ENCODE measurements at regions of chr7 and their contacts with region 1.

Region 1: DNA sequence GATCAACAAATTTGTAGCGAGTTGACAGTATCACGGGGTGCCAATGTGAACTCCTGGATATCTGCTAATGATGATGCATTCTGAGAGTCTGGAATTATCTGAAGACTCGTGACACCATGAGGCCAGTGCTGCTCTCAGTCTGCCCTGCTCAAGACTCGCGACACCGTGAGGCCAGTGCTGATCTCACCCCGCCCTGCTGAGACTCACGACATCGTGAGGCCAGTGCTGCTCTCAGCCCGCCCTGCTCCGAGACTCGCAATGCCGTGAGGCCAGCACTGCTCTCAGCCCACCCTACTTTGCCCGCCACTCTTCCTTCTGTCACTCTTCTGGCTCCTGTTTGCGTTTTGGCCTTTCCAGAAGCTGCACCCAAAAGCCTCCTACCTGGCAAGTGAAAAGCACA is 411.8 kb downstream of the PTPRN2 start:
- DNase-seq: no peak
- ATAC-seq: no peak
- H3K4me3 ChIP-seq: no peak overlapping the region
- H3K27ac ChIP-seq: no peak overlapping the region
- H3K4me1 ChIP-seq: no peaks in the 10 kb centered on the region
- H3K27me3 ChIP-seq: no peaks in the 10 kb centered on the region
- CTCF ChIP-seq: no peak
- POLR2A ChIP-seq: no peak

Region 2: DNA sequence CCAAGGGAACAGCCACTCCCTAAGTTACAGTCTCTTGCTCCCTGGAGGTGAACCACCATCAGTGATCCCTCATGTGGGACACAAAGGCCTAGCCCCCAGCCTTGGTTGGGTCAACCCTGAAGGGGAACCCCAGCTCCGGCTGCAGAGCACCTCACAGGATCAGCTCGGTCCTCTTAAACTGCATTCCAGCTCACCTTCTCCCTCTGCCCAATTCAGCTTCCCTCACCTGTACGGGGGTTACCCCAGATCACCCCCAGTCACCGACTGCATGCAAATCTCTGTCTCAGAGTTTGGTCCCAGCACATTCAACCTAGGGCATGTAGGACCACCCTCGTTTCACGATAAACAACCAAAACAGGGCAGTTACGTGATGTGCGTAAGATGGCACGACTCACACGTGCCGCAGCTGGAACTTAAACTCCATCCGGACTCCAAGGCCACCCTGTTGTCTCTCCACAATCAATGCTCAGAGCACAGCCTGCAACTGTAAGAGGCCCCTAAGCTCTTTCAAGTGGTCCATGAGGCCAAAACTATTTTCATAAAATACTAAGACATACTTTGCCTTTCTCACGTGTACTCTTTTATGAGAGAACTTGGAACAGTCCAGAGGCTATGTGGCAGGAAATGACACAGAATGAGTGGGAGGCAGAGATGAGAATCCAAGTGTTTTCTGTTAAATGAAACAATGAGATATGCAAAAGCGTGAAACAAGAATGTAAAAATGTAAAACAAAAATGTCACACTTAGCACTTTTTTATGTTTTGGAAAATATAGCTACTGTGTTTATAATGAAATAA is 126.7 kb after region 1 on chr7:
- intact Hi-C with region 1: loop called in 1 of 2 experiments (anchors 5 kb)
- DNase-seq: no peak
- ATAC-seq: no peak
- H3K4me3 ChIP-seq: no peak overlapping the region
- H3K27ac ChIP-seq: no peak overlapping the region
- H3K4me1 ChIP-seq: no peaks in the 10 kb centered on the region
- H3K27me3 ChIP-seq: no peaks in the 10 kb centered on the region
- CTCF ChIP-seq: no peak
- POLR2A ChIP-seq: no peak

Region 3: GRCh38 chr7:158655931-158656441 is 480.2 kb after region 1 on chr7:
- intact Hi-C with region 1: no loop called
- DNase-seq: no peak
- ATAC-seq: no peak
- H3K4me3 ChIP-seq: no peak overlapping the region
- H3K27ac ChIP-seq: no peak overlapping the region
- H3K4me1 ChIP-seq: no peaks in the 10 kb centered on the region
- H3K27me3 ChIP-seq: no peaks in the 10 kb centered on the region
- CTCF ChIP-seq: no peak
- POLR2A ChIP-seq: no peak

Measured in right lobe of liver (tissue), 6 donors.